Activated CD4-positive, alpha-beta T cell treated with anti-CD3 and anti-CD28 coated beads for 36 hours (primary cell): ENCODE measurements at regions of chr15 and their contacts with region 1.

Region 1: GRCh38 chr15:64162870-64163658 is at the start of gene PPIB:
- DNase-seq: peak; percentile 99
- ATAC-seq: peak; percentile 94
- H3K4me3 Mint-ChIP-seq: peak within 1 kb of the TSS; percentile 86
- H3K27ac Mint-ChIP-seq: peak within 1 kb of the TSS; percentile 100
- H3K4me1 Mint-ChIP-seq: peaks cover 47% of the 10 kb centered on the region
- H3K27me3 Mint-ChIP-seq: no peaks in the 10 kb centered on the region
- total RNA-seq, gene PPIB: 221 to 233 TPM

Region 2: GRCh38 chr15:64093627-64094417 is 69.2 kb before region 1 on chr15 and contains the start of gene CIAO2A:
- CTCF ChIA-PET with region 1: interaction called, 7 read pairs
- POLR2A ChIA-PET with region 1: interaction called, 12 read pairs
- intact Hi-C with region 1: loop called (anchors 1 kb)
- DNase-seq: peak; percentile 97
- ATAC-seq: peak; percentile 87
- H3K4me3 Mint-ChIP-seq: peak within 1 kb of the TSS; percentile 91
- H3K27ac Mint-ChIP-seq: peak within 1 kb of the TSS; percentile 96
- H3K4me1 Mint-ChIP-seq: peaks cover 49% of the 10 kb centered on the region
- H3K27me3 Mint-ChIP-seq: no peaks in the 10 kb centered on the region
- total RNA-seq, gene CIAO2A: 95.5 to 111 TPM

Region 3: DNA sequence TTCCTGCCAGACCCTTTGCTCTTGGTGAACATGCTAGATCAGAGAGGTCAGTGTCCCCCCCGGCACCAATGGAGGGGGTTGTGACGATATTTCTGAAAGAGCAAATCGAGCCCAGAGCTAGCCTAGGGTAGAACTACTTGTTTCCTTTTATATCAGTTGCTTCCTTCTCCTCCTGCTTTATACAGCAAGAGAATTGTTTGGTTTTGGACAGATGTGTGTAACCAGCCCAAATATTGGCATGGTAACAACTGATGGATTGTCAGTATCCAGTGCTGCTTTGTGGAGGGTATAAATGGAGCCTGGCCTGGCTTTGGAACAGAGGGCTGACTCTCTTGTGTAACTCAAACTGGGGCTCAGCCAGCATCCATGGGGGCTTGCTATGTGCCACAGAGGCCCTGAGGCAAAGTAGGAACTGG is 40.1 kb before region 1 on chr15:
- CTCF ChIA-PET with region 1: no interaction called
- POLR2A ChIA-PET with region 1: no interaction called
- intact Hi-C with region 1: no loop called
- DNase-seq: no peak
- ATAC-seq: no peak
- H3K4me3 Mint-ChIP-seq: no peak overlapping the region
- H3K27ac Mint-ChIP-seq: no peak overlapping the region
- H3K4me1 Mint-ChIP-seq: no peaks in the 10 kb centered on the region
- H3K27me3 Mint-ChIP-seq: no peaks in the 10 kb centered on the region

Region 4: DNA sequence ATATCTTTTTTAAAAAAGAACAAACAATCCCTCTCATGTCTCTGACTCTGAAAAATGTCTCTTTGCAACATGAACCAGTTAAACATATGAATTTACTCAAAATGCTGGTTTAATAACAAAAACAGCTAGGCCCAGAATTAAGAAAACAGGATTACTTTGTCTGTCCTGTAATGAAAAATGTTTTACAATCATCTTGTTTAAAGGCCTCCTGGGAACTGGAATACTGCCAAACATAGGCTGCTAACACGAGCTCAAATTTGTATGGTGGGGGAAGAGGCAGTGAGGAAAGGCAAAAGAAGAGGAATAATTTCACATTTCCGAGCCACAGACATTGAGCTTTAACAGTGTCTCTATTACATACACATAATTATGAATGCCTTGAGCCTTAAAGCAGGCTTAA is 61.4 kb after region 1 on chr15:
- CTCF ChIA-PET with region 1: no interaction called
- POLR2A ChIA-PET with region 1: no interaction called
- intact Hi-C with region 1: no loop called
- DNase-seq: no peak
- ATAC-seq: no peak
- H3K4me3 Mint-ChIP-seq: no peak overlapping the region
- H3K27ac Mint-ChIP-seq: no peak overlapping the region
- H3K4me1 Mint-ChIP-seq: peaks cover 26% of the 10 kb centered on the region
- H3K27me3 Mint-ChIP-seq: no peaks in the 10 kb centered on the region

Region 5: GRCh38 chr15:64355944-64356709 is 193.1 kb after region 1 on chr15 and contains the start of gene CSNK1G1:
- CTCF ChIA-PET with region 1: no interaction called
- POLR2A ChIA-PET with region 1: no interaction called
- intact Hi-C with region 1: loop called (anchors 1 kb)
- DNase-seq: peak; percentile 94
- ATAC-seq: peak; percentile 99
- H3K4me3 Mint-ChIP-seq: peak within 1 kb of the TSS; percentile 89
- H3K27ac Mint-ChIP-seq: peak within 1 kb of the TSS; percentile 84
- H3K4me1 Mint-ChIP-seq: peaks cover 17% of the 10 kb centered on the region
- H3K27me3 Mint-ChIP-seq: no peaks in the 10 kb centered on the region
- total RNA-seq, gene CSNK1G1: 20.3 to 22.5 TPM

Region 6: DNA sequence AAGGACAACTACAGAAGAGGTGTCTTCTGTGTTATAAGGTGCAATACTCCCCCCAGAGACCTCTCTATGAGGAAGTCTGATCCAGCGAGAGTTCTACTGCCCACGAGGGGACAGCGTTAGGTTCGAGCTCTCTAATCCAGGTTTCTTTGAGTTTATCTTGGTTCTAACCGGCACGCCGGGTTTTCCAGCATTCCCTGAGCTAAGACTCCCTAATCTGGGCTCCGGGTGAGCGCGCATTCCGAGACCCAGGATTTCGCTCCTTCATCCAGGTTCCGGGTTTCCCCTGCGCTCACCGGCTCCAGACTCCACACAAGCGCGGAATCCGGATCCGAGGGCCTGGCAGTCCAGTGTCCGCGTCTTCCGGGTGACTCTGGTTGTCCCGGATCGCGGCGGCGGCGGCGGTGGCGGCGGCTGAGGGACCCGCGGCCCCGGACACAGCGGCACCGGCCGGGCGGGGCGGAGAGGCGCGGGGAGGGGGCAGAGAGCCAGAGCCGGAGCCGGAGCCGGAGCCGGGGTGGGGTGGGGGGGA is 297.2 kb after region 1 on chr15 and contains the start of gene ZNF609:
- CTCF ChIA-PET with region 1: no interaction called
- POLR2A ChIA-PET with region 1: no interaction called
- intact Hi-C with region 1: loop called in 1 of 2 experiments (anchors 1 kb)
- DNase-seq: peak; percentile 94
- ATAC-seq: peak; percentile 54
- H3K4me3 Mint-ChIP-seq: peak within 1 kb of the TSS; percentile 83
- H3K27ac Mint-ChIP-seq: peak within 1 kb of the TSS; percentile 92
- H3K4me1 Mint-ChIP-seq: peaks cover 80% of the 10 kb centered on the region
- H3K27me3 Mint-ChIP-seq: no peaks in the 10 kb centered on the region
- total RNA-seq, gene ZNF609: 39.8 to 44.5 TPM

Region 7: GRCh38 chr15:64825431-64826294 is 662.6 kb after region 1 on chr15 and contains the start of gene PIF1:
- CTCF ChIA-PET with region 1: no interaction called
- POLR2A ChIA-PET with region 1: no interaction called
- intact Hi-C with region 1: loop called in 1 of 2 experiments (anchors 10 kb)
- DNase-seq: peak; percentile 92
- ATAC-seq: peak; percentile 94
- H3K4me3 Mint-ChIP-seq: peak within 1 kb of the TSS; percentile 87
- H3K27ac Mint-ChIP-seq: peak within 1 kb of the TSS; percentile 93
- H3K4me1 Mint-ChIP-seq: peaks cover 23% of the 10 kb centered on the region
- H3K27me3 Mint-ChIP-seq: peaks cover 6% of the 10 kb centered on the region
- total RNA-seq, gene PIF1: 30.0 to 36.3 TPM

Region 8: DNA sequence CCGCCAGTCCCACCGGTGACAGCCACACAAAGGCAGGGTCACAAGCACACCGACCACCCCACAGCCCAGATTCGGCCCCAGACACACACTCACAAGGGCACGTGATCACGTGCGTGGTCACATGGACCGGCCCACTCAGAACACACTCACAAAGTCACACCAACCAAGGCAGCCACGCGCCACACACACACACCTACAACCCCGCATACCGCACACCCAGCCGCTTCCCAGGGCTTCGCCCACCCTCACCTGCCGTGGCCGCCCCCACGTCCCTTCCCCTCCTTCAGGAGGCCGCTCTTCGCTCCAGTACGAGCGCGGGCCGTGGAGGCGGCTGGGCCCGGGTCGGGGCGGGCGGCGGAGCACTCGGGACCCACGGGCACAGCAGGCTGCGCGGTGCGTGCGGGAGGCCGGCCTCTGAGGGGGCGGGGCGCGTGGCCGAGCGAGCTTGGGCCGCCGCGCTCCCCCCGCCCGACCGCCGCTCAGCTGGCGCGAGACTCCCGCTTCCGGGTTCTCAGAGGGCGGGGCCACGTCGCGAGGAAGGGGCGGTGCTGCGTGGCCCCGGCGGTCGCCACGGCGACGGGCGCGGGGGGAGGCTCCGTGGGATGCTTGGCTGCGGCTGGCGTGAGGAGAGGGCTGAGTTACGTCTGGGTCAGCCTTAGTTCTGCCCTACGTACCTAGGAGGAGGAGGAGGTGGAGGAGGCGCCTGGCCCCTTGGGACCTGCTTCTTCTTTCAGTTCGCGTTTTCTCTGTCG is 826.5 kb after region 1 on chr15 and contains the start of gene SPG21:
- CTCF ChIA-PET with region 1: no interaction called
- POLR2A ChIA-PET with region 1: interaction called, 3 read pairs
- intact Hi-C with region 1: loop called in 1 of 2 experiments (anchors 1 kb)
- DNase-seq: peak; percentile 94
- ATAC-seq: peak; percentile 96
- H3K4me3 Mint-ChIP-seq: peak within 1 kb of the TSS; percentile 96
- H3K27ac Mint-ChIP-seq: peak within 1 kb of the TSS; percentile 88
- H3K4me1 Mint-ChIP-seq: peaks cover 37% of the 10 kb centered on the region
- H3K27me3 Mint-ChIP-seq: no peaks in the 10 kb centered on the region
- total RNA-seq, gene SPG21: 74.1 to 79.1 TPM